ENCODE measurements at regions of chr12 and their contacts with region 1.

Region 1: DNA sequence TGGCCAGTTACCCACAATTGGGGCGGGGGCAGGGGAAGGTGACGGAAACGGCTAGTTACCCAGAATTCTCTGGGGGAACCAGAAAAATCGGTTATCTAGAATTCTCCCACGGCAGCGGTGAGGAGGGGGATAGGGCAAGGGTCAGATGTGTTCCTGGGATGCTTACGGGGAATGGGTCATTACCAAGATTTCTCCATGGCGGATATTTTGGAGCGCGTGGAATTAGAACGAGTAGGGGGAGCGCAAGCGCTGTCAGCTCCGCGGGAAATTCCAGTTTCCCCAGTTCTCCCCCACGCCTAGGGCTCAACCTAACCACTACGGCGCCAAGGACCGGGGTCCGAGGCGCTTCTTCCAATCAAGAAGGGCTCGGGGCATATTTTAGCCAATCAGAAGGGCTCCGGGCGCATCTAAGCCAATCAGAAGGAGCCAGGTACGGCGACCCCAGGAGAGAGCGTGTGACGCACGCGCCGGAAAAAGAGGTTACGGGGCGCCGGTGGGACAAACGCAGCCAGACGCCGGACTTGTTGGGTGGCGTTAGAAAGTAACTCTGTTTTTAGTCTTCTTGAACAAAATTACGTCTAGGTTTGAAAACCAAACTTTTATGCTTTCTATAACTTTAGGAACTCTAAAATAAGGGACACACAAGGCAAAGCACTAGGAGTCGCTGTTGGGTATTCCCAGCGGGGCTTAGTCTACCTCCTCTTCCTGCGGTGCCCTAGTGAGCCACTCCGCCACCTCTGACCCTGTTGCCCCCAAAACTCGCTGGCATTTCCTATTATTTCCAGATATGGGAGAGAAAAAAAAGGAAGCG is at the start of gene PAN2:
- DNase-seq: peak; percentile 98
- H3K4me3 Mint-ChIP-seq: peak within 1 kb of the TSS; percentile 97
- H3K27ac Mint-ChIP-seq: peak within 1 kb of the TSS; percentile 100
- H3K4me1 Mint-ChIP-seq: peaks cover 44% of the 10 kb centered on the region
- H3K27me3 Mint-ChIP-seq: no peaks in the 10 kb centered on the region
- total RNA-seq, gene PAN2: 82.7 to 85.4 TPM

Region 2: DNA sequence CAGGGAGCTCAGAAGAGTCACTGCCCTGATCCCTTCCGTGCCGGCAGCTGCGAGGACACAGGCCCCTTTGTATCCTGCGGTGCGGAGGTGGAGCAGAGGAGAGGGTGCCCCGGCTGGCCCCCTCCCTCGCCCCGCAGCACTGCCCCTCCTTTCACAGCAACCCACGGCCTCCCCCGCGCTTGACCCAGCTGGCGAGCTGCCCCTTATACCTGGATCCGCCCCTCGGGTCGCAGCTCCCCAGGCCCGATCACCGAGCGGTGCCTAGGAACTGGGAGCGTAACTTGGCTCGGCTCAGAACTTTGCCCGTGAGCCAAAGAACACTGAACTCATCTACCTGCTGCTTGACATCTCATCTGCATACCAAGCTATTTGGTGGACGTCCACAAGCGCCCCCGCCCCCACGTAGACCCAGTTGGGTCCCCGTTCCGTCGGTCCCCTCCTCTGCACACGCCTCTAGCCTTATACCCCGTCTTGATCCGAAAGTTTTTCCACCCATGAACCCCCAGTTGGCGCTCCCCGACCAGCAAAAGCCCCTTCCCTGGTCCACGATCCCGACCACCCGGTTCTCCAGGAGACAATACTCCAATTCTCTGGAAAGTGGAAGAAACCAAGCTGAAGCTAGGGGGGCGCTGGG is 503.8 kb before region 1 on chr12:
- CTCF ChIA-PET with region 1: no interaction called
- intact Hi-C with region 1: loop called (anchors 5 kb)
- DNase-seq: peak; percentile 24
- H3K4me3 Mint-ChIP-seq: peak overlapping the region; percentile 96
- H3K27ac Mint-ChIP-seq: peak overlapping the region; percentile 87
- H3K4me1 Mint-ChIP-seq: peaks cover 52% of the 10 kb centered on the region
- H3K27me3 Mint-ChIP-seq: no peaks in the 10 kb centered on the region

Region 3: GRCh38 chr12:55899082-55899481 is 434.8 kb before region 1 on chr12:
- CTCF ChIA-PET with region 1: no interaction called
- intact Hi-C with region 1: no loop called
- DNase-seq: peak; percentile 71
- H3K4me3 Mint-ChIP-seq: no peak overlapping the region
- H3K27ac Mint-ChIP-seq: peak overlapping the region; percentile 70
- H3K4me1 Mint-ChIP-seq: peaks cover 13% of the 10 kb centered on the region
- H3K27me3 Mint-ChIP-seq: no peaks in the 10 kb centered on the region

Region 4: GRCh38 chr12:56078990-56079664 is 254.8 kb before region 1 on chr12:
- CTCF ChIA-PET with region 1: no interaction called
- intact Hi-C with region 1: no loop called
- DNase-seq: peak; percentile 70
- H3K4me3 Mint-ChIP-seq: peak overlapping the region; percentile 76
- H3K27ac Mint-ChIP-seq: no peak overlapping the region
- H3K4me1 Mint-ChIP-seq: peaks cover 12% of the 10 kb centered on the region
- H3K27me3 Mint-ChIP-seq: peaks cover 17% of the 10 kb centered on the region

Region 5: GRCh38 chr12:56224102-56224701 is 109.7 kb before region 1 on chr12 and contains the start of gene NABP2:
- CTCF ChIA-PET with region 1: no interaction called
- intact Hi-C with region 1: loop called (anchors 1 kb)
- DNase-seq: peak; percentile 97
- H3K4me3 Mint-ChIP-seq: peak within 1 kb of the TSS; percentile 99
- H3K27ac Mint-ChIP-seq: peak within 1 kb of the TSS; percentile 93
- H3K4me1 Mint-ChIP-seq: peaks cover 37% of the 10 kb centered on the region
- H3K27me3 Mint-ChIP-seq: no peaks in the 10 kb centered on the region
- total RNA-seq, gene NABP2: 57.4 to 59.0 TPM

Region 6: DNA sequence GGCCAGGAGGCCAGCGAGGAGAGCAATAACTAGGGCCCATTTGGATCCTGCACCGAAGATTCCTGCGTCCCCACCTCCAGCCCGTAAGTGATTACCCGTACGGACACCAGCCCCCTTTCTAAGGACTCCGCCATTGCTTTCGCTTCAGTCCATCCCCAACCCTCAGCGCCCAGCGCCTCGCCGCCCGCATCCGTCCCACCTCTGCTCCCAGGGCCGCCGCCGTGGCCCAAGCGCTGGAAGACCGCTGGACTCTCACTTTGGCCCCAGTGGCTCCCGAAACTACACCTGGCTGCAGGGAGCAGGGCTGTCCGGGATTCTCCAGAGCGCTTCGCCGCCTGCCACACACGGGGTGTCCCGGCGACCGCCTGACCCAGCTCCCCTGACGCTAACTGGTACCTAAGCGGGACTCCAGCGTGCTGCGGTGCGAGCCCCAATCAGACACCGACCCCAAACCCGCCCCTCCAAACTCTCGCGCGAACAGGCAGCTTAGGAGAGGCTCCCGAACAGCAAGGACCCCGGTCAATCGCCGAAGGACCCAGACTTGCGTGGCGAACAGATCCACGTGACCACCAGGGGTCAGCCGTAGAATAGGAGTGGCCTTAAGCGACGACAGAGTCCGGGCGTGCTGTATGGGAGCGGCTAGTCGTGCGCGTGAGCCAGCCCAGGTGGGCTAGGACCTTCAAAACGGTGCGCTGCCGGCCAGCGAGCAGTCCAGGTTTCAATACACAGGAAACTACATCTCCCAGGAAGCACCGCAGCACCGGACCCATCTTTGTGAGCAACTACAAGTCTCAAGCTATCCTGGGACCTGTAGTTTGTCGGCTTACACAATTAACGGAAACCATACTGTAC is 18.0 kb before region 1 on chr12 and contains the start of gene CNPY2:
- CTCF ChIA-PET with region 1: interaction called, 8 read pairs
- intact Hi-C with region 1: loop called (anchors 1 kb)
- DNase-seq: peak; percentile 92
- H3K4me3 Mint-ChIP-seq: peak within 1 kb of the TSS; percentile 97
- H3K27ac Mint-ChIP-seq: peak within 1 kb of the TSS; percentile 97
- H3K4me1 Mint-ChIP-seq: peaks cover 16% of the 10 kb centered on the region
- H3K27me3 Mint-ChIP-seq: no peaks in the 10 kb centered on the region
- total RNA-seq, gene CNPY2: 47.5 to 57.3 TPM

Region 7: DNA sequence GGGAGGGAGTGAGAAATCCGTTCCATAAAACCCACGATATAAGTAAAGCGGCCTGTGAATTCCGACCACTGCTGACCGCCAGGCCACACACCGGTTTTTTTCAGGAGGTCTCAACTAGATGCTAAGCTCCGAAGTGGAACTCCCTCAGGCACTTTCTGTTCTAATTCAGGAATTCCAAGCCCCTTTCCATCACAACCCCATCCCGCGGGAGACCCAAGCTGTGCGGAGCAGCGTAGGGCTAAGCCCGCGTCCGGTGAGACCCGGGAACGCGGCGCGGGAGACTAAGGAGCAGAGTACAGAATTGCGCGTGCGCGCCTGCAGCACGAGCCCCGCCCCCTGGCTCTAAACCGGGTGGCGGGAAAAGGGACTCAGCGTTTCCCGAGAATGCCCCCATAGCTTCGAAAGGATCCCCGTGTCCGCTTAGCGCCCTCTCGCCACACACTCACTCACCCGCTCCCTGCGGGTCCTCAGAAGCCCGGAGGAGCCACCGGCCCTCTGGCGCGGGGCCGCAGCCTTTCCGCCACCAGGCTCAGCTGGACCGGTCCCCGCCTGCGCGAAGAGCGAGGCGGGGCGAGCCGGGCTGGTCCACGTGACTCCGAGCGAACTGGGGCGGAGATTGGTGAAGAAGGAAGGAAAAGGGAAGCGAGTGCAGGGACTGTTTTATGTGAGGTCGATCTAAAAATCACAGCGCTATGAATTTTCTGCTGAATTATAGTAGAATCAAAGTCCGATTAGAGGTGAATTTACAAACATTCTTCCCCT is 115.2 kb after region 1 on chr12 and contains the start of gene TIMELESS:
- CTCF ChIA-PET with region 1: interaction called, 5 read pairs
- intact Hi-C with region 1: loop called (anchors 1 kb)
- DNase-seq: peak; percentile 90
- H3K4me3 Mint-ChIP-seq: peak within 1 kb of the TSS; percentile 89
- H3K27ac Mint-ChIP-seq: peak within 1 kb of the TSS; percentile 96
- H3K4me1 Mint-ChIP-seq: peaks cover 16% of the 10 kb centered on the region
- H3K27me3 Mint-ChIP-seq: no peaks in the 10 kb centered on the region
- total RNA-seq, gene TIMELESS: 69.9 to 70.8 TPM